Activated CD4-positive, alpha-beta T cell treated with anti-CD3 and anti-CD28 coated beads for 36 hours (primary cell): ENCODE measurements at regions of chr10 and their contacts with region 1.

Region 1: GRCh38 chr10:102009801-102010425 is 46.1 kb downstream of the ARMH3 start:
- DNase-seq: peak; percentile 46
- ATAC-seq: peak; percentile 84
- H3K4me3 Mint-ChIP-seq: no peak overlapping the region
- H3K27ac Mint-ChIP-seq: no peak overlapping the region
- H3K4me1 Mint-ChIP-seq: no peaks in the 10 kb centered on the region
- H3K27me3 Mint-ChIP-seq: no peaks in the 10 kb centered on the region

Region 2: DNA sequence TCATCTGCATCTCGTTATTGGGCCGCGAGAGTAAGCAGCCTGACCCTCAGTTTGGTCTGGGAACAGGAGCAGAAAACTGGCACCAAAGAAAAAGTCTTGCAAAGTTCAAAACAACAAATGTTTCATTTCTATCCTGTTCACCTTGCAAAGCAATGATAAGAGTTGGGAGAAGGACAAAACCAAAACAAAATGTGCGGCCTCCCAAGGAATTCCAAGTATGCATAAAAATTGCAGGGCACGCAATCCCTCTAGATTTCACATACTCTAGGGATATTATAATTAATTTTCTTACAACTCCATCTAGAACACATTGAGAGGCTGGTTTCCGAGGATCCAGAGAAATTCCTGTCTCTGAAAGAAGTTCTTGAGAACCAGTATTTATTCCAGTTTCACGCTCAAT is 1800.6 kb before region 1 on chr10:
- CTCF ChIA-PET with region 1: no interaction called
- POLR2A ChIA-PET with region 1: no interaction called
- intact Hi-C with region 1: no loop called
- DNase-seq: no peak
- ATAC-seq: no peak
- H3K4me3 Mint-ChIP-seq: no peak overlapping the region
- H3K27ac Mint-ChIP-seq: no peak overlapping the region
- H3K4me1 Mint-ChIP-seq: peaks cover 1% of the 10 kb centered on the region
- H3K27me3 Mint-ChIP-seq: no peaks in the 10 kb centered on the region

Region 3: DNA sequence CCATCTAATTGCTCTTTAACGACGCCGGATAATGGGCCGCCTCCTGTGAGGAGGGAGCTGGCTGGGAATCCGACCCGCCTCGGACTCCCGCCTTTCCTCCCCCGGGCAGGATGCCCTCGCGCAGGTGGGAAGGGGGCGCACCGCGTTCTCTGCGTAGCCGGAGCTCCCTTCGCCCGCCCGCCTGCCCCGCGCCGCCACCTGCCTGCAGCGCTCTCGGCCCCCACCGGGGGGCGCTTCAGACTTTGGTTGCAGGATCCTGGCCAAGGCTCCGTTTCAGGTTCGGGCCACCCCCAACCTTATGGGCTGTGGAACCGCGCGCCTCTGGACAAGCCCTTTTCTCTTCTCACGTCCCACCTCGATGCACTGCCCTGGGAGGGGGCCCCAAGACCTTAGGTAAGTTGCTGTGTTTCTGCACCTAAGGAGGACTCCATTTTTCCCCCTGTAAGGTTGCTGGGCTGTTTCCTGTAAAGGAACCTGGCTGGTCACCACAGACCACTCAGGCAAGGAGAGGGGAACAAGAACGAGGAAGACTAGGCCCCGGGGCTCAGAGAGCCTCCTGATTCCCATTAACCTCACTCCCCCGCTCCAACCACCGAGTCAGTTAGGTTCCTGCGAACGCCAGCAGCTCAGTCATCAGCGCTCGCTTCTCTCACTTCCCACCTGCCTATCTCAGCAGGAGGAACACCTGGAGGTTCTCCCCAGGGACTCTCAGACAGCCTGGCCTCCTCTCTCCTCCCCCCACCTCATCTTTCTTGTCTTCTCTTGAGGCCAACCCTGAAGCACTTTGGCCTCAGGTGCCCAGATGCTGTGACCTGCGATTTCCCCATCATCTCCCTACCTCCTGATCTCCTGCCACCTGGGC is 959.5 kb before region 1 on chr10:
- CTCF ChIA-PET with region 1: no interaction called
- POLR2A ChIA-PET with region 1: no interaction called
- intact Hi-C with region 1: no loop called
- DNase-seq: peak; percentile 88
- ATAC-seq: peak; percentile 92
- H3K4me3 Mint-ChIP-seq: no peak overlapping the region
- H3K27ac Mint-ChIP-seq: no peak overlapping the region
- H3K4me1 Mint-ChIP-seq: peaks cover 10% of the 10 kb centered on the region
- H3K27me3 Mint-ChIP-seq: peaks cover 43% of the 10 kb centered on the region

Region 4: DNA sequence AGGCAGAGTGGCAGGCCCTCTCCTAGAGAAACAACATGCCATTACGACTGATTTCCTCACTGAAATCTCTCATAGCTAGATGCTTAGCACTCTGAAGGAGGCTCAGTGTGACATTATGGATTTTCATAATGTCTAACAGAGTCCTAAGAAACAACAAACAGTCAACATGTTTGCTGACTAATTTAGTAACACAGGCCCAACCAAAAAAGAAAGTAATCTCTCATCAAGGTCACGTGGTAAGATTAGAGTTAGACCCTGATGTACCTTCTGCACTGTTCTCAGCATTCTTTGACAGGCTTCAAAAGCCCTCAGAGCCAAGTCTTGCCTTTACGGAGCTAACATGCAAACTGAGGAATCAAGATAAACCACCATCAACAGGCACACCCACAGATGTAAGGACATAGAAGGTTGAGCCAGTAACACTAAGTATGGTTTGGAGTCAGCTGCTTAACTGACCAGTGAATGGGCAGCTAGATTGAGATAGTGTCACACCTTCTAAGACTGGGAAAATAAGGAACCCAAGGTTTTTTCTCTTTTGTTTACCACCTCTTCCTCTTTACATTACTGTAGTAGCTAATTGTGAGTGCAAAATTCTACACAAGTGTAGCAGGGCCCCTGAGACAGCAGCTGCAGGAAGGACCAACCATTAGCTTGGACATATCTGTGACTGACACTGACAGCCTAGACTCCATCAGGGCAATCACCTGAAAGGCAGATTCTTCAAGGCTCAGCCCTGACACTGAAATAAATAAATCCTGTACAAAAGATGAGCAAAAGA is 151.0 kb before region 1 on chr10:
- CTCF ChIA-PET with region 1: interaction called, 15 read pairs
- POLR2A ChIA-PET with region 1: no interaction called
- intact Hi-C with region 1: no loop called
- DNase-seq: no peak
- ATAC-seq: peak; percentile 55
- H3K4me3 Mint-ChIP-seq: no peak overlapping the region
- H3K27ac Mint-ChIP-seq: no peak overlapping the region
- H3K4me1 Mint-ChIP-seq: peaks cover 4% of the 10 kb centered on the region
- H3K27me3 Mint-ChIP-seq: no peaks in the 10 kb centered on the region

Region 5: GRCh38 chr10:101889256-101890210 is 120.4 kb before region 1 on chr10:
- CTCF ChIA-PET with region 1: interaction called, 73 read pairs
- POLR2A ChIA-PET with region 1: no interaction called
- intact Hi-C with region 1: loop called (anchors 1 kb)
- DNase-seq: peak; percentile 89
- ATAC-seq: peak; percentile 80
- H3K4me3 Mint-ChIP-seq: no peak overlapping the region
- H3K27ac Mint-ChIP-seq: no peak overlapping the region
- H3K4me1 Mint-ChIP-seq: peaks cover 4% of the 10 kb centered on the region
- H3K27me3 Mint-ChIP-seq: no peaks in the 10 kb centered on the region

Region 6: DNA sequence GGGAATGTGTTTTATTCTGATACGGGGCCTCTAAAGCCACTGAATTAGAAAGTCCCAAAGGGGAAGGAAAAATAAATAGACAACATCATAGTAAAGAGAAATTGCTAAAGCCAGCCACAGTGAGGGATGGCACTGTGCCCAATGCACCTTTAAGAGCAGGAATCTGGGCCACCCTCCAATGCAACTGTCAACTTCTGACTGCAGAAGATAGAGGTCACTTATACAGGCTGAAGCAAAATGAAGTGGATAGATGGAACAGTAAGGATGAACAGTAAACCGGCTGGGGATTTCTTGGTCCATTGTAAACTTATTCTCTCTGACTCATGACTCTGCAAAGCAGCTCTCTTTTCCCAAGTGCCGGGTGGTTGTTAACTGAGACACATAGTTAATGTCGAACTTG is 112.3 kb before region 1 on chr10:
- CTCF ChIA-PET with region 1: interaction called, 10 read pairs
- POLR2A ChIA-PET with region 1: no interaction called
- intact Hi-C with region 1: no loop called
- DNase-seq: no peak
- ATAC-seq: no peak
- H3K4me3 Mint-ChIP-seq: no peak overlapping the region
- H3K27ac Mint-ChIP-seq: no peak overlapping the region
- H3K4me1 Mint-ChIP-seq: peaks cover 14% of the 10 kb centered on the region
- H3K27me3 Mint-ChIP-seq: no peaks in the 10 kb centered on the region

Region 7: DNA sequence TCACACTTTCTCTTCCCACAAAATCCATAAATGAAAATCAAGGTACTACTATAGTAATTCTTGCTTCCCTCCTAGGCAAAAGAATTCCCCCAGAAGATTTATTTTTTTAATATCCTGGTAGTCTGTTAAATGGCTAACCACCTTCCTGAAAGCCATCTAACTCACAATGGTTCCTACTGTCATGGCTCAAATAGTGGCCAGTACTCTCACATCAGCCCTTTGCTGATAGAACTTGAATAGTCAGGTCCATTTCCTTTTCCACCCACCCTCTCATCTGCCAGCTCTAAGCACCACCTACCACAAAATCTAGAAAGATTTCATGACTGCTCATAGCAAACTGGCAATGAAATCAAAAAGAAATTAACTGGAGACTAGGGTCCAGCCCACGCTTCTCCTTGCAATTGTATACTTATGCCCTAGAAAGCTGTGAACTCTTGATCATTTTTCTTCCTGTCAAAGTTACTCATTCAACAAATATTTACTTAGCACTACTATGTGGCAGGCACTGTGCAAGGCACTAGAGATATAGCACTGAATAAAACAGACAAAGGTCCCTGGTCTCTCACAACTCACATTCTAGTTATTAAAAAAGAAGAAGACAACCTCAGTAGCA is 14.4 kb before region 1 on chr10:
- CTCF ChIA-PET with region 1: interaction called, 50 read pairs
- POLR2A ChIA-PET with region 1: no interaction called
- intact Hi-C with region 1: no loop called
- DNase-seq: no peak
- ATAC-seq: no peak
- H3K4me3 Mint-ChIP-seq: no peak overlapping the region
- H3K27ac Mint-ChIP-seq: no peak overlapping the region
- H3K4me1 Mint-ChIP-seq: peaks cover 1% of the 10 kb centered on the region
- H3K27me3 Mint-ChIP-seq: no peaks in the 10 kb centered on the region

Region 8: GRCh38 chr10:102072673-102073527 is 63.0 kb after region 1 on chr10:
- CTCF ChIA-PET with region 1: interaction called, 20 read pairs
- POLR2A ChIA-PET with region 1: no interaction called
- intact Hi-C with region 1: loop called in 1 of 2 experiments (anchors 2 kb)
- DNase-seq: peak; percentile 89
- ATAC-seq: peak; percentile 97
- H3K4me3 Mint-ChIP-seq: no peak overlapping the region
- H3K27ac Mint-ChIP-seq: no peak overlapping the region
- H3K4me1 Mint-ChIP-seq: peaks cover 2% of the 10 kb centered on the region
- H3K27me3 Mint-ChIP-seq: no peaks in the 10 kb centered on the region